AG04450 (cell line): ENCODE measurements at regions of chr2 and their contacts with region 1.

Region 1: DNA sequence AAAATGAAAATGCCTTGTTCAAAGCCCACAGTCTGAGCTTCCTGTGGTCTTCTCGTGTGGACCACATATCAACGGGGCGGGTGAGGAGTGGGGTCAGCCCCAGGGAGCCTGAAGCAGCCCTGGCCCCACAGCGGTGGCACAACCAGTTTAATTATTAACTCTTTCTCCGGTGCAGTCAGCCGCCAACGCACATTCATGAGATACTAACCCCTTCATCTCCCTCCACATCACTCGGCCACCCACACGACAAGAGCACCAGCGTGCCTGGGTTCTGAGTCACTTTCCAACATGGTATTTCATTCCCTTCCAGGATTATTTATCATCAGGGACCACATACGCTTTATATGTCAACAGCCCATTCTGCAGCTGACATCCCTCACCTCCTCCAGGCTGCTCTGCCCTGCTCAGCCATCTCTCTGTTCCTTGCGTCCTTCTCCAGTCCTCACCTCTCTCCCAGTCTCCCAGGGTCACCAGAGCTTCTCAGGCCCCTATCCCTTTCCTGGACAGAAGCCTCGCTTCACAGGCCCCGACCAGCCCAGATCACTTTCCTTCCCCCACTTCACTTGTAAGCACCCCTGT is 48.0 kb upstream of the ID2 start:
- DNase-seq: peak; percentile 79
- H3K4me3 ChIP-seq: peak overlapping the region; percentile 11
- H3K27ac ChIP-seq: peak overlapping the region; percentile 91
- H3K27me3 ChIP-seq: no peaks in the 10 kb centered on the region
- CTCF ChIP-seq: no peak

Region 2: DNA sequence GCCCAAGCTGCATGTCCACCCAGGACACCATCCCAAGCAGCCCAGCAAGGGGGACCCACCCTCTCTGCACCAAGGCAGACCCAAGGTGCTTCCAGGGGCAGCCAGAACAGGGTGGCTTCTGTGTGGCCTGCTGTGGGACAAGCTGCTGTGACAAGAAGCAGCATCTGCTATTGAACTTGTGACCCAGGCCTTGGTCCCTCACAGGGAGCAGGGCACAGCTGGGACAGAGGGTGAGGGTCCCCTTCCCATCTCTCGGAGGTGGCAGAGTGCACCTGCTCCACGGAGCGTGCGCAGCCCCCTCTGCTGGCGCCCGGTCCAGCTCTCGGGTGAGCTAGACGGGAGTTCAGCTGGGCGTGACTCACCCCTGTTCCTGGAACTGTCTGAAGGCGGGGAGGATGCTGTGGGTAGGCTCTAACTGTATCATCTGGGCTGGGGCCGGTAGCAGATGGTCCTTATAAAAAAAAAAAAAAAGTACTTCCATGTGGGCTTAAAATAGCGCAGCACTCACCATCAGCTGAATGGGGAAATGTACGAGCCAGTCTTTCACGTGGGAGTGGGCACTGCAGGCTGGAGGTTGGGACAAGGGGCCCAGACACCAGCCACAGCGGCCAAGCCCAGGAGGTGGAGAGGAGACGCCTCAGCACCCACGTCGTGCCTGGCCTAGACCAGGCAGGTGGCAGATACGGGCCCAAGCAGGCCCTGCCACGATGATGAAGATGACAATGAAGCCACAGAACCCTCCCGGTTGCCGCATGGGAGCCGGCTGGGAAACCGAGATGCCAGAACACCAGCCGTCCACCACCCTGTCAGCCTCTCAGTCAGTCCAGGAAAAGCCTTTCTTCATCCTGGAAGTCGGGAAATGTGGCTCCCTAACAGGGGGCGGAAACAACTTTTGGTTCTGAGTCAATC is 88.8 kb before region 1 on chr2:
- CTCF ChIA-PET with region 1: no interaction called
- POLR2A ChIA-PET with region 1: interaction called, 11 read pairs
- DNase-seq: peak; percentile 79
- H3K4me3 ChIP-seq: no peak overlapping the region
- H3K27ac ChIP-seq: peak overlapping the region; percentile 61
- H3K27me3 ChIP-seq: no peaks in the 10 kb centered on the region
- CTCF ChIP-seq: peak; percentile 47